ENCODE measurements at regions of chr1 and their contacts with region 1.

Region 1: DNA sequence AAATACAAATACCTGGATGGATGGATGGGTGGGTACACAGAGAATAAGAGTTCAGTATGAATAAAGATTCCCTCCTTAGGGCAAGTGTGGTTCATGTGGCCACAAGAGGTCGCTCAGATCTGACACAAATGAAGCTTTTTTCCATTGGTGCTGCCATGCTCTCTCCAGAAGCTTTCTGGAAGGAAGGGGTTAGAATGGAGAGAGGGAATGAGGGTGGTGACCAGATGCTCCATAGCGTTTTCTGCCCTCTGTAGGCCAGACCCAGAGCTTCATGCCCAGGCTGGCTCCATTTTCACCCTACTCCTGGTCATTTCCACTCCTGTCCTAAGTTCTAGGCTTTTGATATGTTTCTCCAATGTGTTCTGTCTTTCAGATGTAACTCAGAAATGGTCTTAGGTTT is 3.3 kb upstream of the FCRL6 start:
- DNase-seq: peak; percentile 14
- H3K4me3 Mint-ChIP-seq: no peak overlapping the region
- H3K27ac Mint-ChIP-seq: no peak overlapping the region
- H3K4me1 Mint-ChIP-seq: peaks cover 14% of the 10 kb centered on the region
- H3K27me3 Mint-ChIP-seq: peaks cover 43% of the 10 kb centered on the region

Region 2: GRCh38 chr1:159821171-159821867 is 22.4 kb after region 1 on chr1:
- intact Hi-C with region 1: loop called (anchors 2 kb)
- DNase-seq: peak; percentile 11
- H3K4me3 Mint-ChIP-seq: no peak overlapping the region
- H3K27ac Mint-ChIP-seq: no peak overlapping the region
- H3K4me1 Mint-ChIP-seq: peaks cover 25% of the 10 kb centered on the region
- H3K27me3 Mint-ChIP-seq: peaks cover 53% of the 10 kb centered on the region

Region 3: DNA sequence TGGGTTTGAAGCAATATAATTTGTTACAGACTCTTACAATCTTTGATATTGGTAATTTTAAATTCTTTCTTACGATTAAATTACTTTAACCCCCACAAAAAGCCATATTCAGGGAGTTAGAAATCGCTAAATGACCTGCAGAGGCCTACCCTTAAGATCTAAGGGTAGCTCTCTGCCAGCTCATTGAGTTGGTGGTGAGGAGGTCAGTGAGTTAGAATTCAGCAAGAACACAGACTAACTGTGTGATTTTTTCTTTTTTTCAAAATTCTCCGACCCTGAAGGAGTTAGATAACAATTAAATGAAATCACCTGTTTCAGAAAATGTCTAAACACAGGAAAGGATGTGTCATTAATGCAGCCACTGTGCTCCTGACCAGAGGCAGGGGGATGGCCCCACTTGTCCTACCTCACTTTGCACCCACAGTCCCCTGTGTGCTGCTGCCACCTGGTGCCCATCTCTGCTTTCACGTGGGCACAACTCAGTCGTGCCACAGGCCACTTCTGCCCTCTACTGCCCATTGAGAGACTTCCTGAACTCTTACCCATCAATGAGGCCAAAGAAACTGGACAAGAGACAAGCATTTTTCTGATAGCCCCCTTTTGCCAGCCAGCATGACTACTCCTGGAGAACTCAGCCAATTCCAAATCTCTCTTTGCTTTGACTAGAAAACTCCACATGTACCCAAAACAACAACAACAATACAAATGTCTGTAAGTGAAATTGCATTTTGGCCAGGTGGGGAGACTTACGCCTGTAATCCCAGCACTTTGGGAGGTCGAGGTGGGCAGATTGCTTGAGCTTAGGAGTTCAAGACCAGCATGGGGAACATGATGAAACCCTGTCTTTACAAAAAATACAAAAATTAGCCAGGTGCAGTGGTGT is 92.6 kb after region 1 on chr1:
- intact Hi-C with region 1: loop called (anchors 1 kb)
- DNase-seq: peak; percentile 64
- H3K4me3 Mint-ChIP-seq: no peak overlapping the region
- H3K27ac Mint-ChIP-seq: no peak overlapping the region
- H3K4me1 Mint-ChIP-seq: peaks cover 12% of the 10 kb centered on the region
- H3K27me3 Mint-ChIP-seq: peaks cover 17% of the 10 kb centered on the region

Region 4: DNA sequence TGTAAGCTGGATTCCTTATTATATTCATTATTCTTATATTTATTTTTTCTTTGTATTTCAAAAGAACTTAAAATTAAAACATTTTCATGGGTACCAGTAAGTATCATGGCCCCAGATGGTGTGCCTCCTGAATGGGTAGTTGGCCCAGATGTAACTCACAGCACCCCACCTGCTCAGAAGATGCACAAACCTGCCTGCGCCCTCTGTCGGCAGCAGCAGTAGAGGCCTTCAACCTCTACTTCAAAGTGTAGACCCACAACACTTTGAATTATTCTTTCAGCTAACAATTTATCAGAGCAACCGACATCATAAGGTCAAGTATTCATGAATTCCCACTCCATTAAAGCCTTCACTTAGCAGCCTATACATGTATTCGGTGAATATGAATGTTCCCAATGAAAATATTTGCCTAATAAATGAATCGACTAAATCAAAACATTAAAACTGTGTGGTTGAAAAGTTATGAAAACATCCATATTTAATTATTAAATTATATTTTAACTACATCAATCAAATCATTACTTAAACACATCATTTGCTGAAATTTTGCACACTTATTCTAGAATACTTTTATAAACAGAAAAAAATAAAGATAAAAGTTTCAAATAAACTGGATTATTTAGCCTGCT is 207.5 kb after region 1 on chr1:
- intact Hi-C with region 1: loop called (anchors 1 kb)
- DNase-seq: peak; percentile 55
- H3K4me3 Mint-ChIP-seq: no peak overlapping the region
- H3K27ac Mint-ChIP-seq: no peak overlapping the region
- H3K4me1 Mint-ChIP-seq: no peaks in the 10 kb centered on the region
- H3K27me3 Mint-ChIP-seq: peaks cover 18% of the 10 kb centered on the region

Measured in activated T-helper 1 cell treated with anti-CD3 and anti-CD28 coated beads, Interleukin-12 subunit alpha, Interleukin-12 subunit beta, Interleukin-2, Interleukin-4 antibody, amounts not matched to agents 30 ng/mL and 10 ng/mL and 1 ng/mL, durations not matched to agents 14 hours and 24 hours and 36 hours (primary cell).